BJ (cell line): ENCODE measurements at regions of chr1 and their contacts with region 1.

Region 1: GRCh38 chr1:6438047-6438525 is 13.5 kb downstream of the ESPN start:
- DNase-seq: no peak
- H3K4me3 ChIP-seq: no peak overlapping the region
- H3K27me3 ChIP-seq: peaks cover 14% of the 10 kb centered on the region
- CTCF ChIP-seq: peak; percentile 91

Region 2: DNA sequence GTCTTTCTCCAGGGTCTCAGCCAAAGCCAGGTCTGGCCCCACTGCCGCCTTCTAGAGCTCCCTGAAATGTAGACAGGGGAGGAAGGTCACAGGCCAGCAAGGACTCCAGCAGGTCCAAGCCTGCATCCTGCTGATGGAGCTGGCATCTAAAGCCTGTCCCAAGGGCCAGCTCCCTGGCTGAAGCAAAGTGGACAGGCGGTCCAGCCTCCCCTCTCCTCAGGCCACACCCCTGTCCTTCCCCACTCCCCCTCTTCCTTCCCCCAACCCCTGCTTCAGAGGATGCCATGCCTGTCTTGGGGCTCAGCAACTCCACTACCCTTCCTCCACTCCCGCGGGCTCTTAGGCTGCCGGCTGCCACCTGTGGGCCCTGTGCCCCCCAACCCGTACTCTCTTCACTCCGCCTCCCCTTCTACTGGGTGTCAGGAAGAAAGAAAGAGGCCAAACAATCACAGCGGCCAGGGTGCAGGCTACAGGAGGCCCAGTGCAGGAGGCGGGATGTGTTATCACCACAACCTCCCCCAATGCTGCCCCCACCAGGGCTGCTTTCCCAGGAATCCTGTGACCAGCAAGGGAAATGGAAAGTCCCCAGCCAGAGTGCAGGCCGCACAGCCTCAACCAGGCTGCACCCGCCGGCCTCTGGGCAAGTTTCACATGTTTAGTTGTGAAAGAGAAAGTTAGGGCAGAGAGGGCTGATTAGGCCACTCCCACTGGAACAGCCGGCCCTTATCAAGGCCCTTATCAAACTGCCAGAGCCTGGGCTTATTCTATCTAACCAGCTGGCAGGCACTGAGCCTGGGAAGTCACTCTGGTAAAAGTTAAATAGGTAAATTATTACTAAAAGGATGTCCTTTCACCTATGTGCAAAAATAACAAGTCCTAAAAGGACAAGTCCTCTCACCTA is 78.6 kb before region 1 on chr1:
- CTCF ChIA-PET with region 1: interaction called, 66 read pairs
- POLR2A ChIA-PET with region 1: no interaction called
- DNase-seq: no peak
- H3K4me3 ChIP-seq: no peak overlapping the region
- H3K27me3 ChIP-seq: no peaks in the 10 kb centered on the region
- CTCF ChIP-seq: no peak

Region 3: GRCh38 chr1:6414443-6414844 is 23.6 kb before region 1 on chr1:
- CTCF ChIA-PET with region 1: interaction called, 24 read pairs
- POLR2A ChIA-PET with region 1: no interaction called
- DNase-seq: no peak
- H3K4me3 ChIP-seq: no peak overlapping the region
- H3K27me3 ChIP-seq: peaks cover 27% of the 10 kb centered on the region
- CTCF ChIP-seq: peak; percentile 80

Region 4: DNA sequence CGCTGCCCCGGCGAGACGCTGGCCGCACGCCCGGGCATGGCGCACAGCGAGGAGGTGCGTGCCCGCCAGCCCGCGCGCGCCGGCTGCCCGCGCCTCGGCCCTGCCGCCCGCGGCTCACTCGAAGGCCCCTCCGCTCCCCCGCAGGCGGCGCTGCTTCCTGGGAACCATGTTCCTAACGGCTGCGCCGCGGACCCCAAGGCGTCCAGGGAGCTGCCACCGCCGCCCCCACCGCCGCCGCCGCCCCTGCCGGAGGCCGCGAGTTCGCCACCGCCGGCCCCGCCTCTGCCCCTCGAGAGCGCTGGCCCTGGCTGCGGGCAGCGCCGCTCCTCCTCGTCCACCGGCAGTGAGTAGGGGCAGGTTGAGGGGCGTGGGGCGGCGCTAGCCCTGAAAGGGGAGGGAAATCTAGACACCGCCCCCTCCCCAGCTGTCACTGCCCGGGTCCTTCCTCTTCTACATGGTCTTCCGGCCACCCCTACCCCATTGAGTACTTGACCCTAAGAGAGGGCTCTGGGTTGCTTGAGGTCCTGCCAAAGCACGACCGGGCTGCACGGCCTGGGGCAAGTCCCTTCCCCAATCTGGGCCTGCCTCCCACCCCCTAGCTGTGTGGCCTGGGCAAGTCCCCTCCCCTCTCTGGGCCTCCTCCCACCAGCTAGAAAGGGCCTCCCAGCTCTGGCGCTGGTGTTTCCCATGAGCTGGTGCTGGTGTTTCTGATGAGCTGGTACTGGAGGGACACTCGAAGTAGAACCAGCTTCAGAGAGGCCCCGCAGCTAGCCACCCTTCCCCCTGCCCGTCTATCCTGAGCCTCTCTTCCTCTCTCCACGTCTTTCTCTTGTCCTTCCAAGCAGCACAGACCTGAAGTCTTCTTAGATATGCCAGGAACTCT is 10.9 kb after region 1 on chr1:
- CTCF ChIA-PET with region 1: interaction called, 62 read pairs
- POLR2A ChIA-PET with region 1: no interaction called
- DNase-seq: no peak
- H3K4me3 ChIP-seq: no peak overlapping the region
- H3K27me3 ChIP-seq: peaks cover 36% of the 10 kb centered on the region
- CTCF ChIP-seq: no peak

Region 5: GRCh38 chr1:6579374-6580118 is 141.5 kb after region 1 on chr1 and contains the start of gene ZBTB48:
- CTCF ChIA-PET with region 1: no interaction called
- POLR2A ChIA-PET with region 1: no interaction called
- DNase-seq: peak; percentile 76
- H3K4me3 ChIP-seq: peak within 1 kb of the TSS; percentile 97
- H3K27me3 ChIP-seq: no peaks in the 10 kb centered on the region
- CTCF ChIP-seq: no peak
- polyA plus RNA-seq, gene ZBTB48: 7.8 and 14.0 TPM in 2 replicates

Region 6: DNA sequence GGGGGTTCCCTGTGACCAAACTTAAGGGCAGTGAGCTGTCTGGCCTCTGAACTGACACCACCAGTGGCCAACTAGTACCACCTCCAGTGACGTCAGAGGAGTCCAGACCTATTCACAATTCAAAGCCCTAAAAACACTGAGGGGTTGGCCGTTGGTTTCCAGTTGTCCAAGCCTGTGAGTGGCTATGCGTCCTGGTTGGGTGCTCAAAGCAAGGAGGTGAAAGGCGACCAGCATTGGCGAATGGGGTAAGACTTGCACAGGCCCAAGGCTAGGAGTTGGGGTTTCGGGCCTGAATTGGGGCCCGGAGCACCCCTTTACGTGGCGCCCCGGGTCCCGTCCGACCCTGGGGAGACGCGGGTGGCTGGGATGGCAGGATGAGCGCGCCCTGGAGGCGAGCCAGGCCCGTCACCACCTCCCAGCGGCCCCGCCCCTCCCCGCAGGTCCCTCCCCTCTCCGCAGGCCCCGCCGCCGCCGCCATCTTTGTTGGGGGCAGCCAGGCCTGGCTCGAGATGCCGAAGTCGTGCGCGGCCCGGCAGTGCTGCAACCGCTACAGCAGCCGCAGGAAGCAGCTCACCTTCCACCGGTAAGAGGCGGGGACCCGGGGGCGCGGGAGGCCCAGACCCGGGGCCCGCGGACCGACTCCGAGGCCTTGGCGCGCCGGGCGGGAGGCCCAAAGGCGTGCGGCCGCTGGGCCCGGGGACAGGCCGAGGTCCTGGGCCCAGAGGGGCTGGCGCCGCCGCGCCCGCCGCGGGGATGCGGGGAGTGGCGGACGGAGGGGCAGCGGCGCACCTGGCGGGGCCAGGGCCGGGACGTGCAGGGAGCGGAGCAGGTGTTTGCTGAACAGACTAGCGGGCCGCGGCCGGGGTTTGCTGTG is 186.9 kb after region 1 on chr1 and contains the start of gene THAP3:
- CTCF ChIA-PET with region 1: no interaction called
- POLR2A ChIA-PET with region 1: no interaction called
- DNase-seq: no peak
- H3K4me3 ChIP-seq: peak within 1 kb of the TSS; percentile 71
- H3K27me3 ChIP-seq: no peaks in the 10 kb centered on the region
- CTCF ChIP-seq: no peak
- polyA plus RNA-seq, gene THAP3: 8.6 and 12.5 TPM in 2 replicates